ENCODE measurements at regions of chr14 and their contacts with region 1.

Region 1: DNA sequence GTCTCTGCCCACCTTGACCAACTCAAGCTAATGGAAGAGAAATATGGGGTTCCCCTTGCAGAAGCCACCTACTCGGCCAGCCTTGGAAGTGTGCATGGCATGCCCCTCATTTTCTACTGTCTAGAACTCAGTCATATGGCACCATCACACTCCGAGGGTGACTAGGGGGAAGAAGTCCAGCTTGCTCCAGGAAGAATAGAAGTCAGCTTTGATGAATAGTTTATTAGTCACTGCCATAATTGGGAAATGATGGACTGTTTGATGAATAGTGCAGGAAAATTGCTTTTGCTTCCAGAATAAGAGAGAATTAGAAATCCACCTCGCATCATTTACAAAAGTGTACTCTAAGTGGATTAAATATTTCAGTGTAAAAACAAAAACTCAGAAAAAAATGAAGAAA is 1030.6 kb downstream of the VRK1 start:
- DNase-seq: no peak
- H3K4me3 ChIP-seq: no peak overlapping the region
- H3K4me3 Mint-ChIP-seq: no peak overlapping the region
- H3K27ac Mint-ChIP-seq: no peak overlapping the region
- H3K4me1 ChIP-seq: no peaks in the 10 kb centered on the region
- H3K4me1 Mint-ChIP-seq: no peaks in the 10 kb centered on the region
- H3K27me3 ChIP-seq: no peaks in the 10 kb centered on the region
- H3K27me3 Mint-ChIP-seq: no peaks in the 10 kb centered on the region
- CTCF ChIP-seq: no peak

Region 2: GRCh38 chr14:97065305-97066067 is 762.3 kb before region 1 on chr14:
- CTCF ChIA-PET with region 1: interaction called, 11 read pairs
- POLR2A ChIA-PET with region 1: no interaction called
- intact Hi-C with region 1: no loop called
- DNase-seq: no peak
- H3K4me3 ChIP-seq: no peak overlapping the region
- H3K4me3 Mint-ChIP-seq: no peak overlapping the region
- H3K27ac Mint-ChIP-seq: no peak overlapping the region
- H3K4me1 ChIP-seq: no peaks in the 10 kb centered on the region
- H3K4me1 Mint-ChIP-seq: no peaks in the 10 kb centered on the region
- H3K27me3 ChIP-seq: no peaks in the 10 kb centered on the region; the same call in 1 of the 2 replicates
- H3K27me3 Mint-ChIP-seq: peaks cover 17% of the 10 kb centered on the region
- CTCF ChIP-seq: no peak

Region 3: DNA sequence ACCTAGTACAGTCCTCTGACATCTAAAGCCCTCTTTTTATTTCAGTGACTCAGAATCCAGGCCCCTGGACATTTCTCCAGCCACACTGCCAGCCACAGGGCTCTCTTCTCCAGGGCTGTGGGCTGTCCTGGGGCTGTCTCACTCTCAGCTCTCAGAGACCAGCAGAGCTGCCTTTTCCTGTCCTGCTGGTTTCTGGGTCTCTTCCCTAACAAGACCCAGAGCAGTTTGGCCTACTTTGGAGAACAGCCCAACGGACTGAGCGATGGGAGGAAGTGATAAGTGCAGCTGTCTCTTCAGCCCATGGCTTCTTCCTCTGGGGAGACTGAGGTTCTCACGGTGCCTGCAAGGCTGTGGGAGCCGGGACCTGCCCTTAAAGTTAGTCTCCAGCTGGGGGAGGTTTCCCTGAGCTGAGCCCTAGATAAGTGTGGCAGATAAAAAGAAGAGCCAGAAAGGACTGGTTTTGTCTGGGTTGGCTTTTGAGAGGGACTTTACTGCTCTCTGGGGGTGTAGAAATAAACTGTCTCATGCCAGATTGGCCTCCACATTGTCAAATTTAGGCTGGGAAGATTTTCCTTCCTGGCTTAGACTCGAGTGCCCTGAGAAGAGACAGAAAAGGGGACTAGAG is 50.7 kb before region 1 on chr14:
- CTCF ChIA-PET with region 1: no interaction called
- POLR2A ChIA-PET with region 1: no interaction called
- intact Hi-C with region 1: no loop called
- DNase-seq: no peak
- H3K4me3 ChIP-seq: no peak overlapping the region
- H3K4me3 Mint-ChIP-seq: no peak overlapping the region
- H3K27ac Mint-ChIP-seq: no peak overlapping the region
- H3K4me1 ChIP-seq: no peaks in the 10 kb centered on the region
- H3K4me1 Mint-ChIP-seq: no peaks in the 10 kb centered on the region
- H3K27me3 ChIP-seq: no peaks in the 10 kb centered on the region
- H3K27me3 Mint-ChIP-seq: no peaks in the 10 kb centered on the region
- CTCF ChIP-seq: no peak